ENCODE measurements at regions of chr6 and their contacts with region 1.

Region 1: GRCh38 chr6:129498950-129499842 is 210.8 kb downstream of the ARHGAP18 start:
- H3K4me3 ChIP-seq: no peak overlapping the region
- H3K27ac ChIP-seq: no peak overlapping the region
- H3K4me1 ChIP-seq: peaks cover 3% of the 10 kb centered on the region; the same call in 1 of the 2 replicates
- CTCF ChIP-seq: peak; percentile 30; the same call in 1 of the 2 replicates

Region 2: GRCh38 chr6:129114636-129115391 is 384.4 kb before region 1 on chr6:
- CTCF ChIA-PET with region 1: no interaction called
- POLR2A ChIA-PET with region 1: no interaction called
- H3K4me3 ChIP-seq: no peak overlapping the region
- H3K27ac ChIP-seq: no peak overlapping the region
- H3K4me1 ChIP-seq: no peaks in the 10 kb centered on the region
- CTCF ChIP-seq: no peak

Region 3: GRCh38 chr6:129416337-129416990 is 82.7 kb before region 1 on chr6:
- CTCF ChIA-PET with region 1: no interaction called
- POLR2A ChIA-PET with region 1: no interaction called
- H3K4me3 ChIP-seq: no peak overlapping the region
- H3K27ac ChIP-seq: no peak overlapping the region
- H3K4me1 ChIP-seq: no peaks in the 10 kb centered on the region
- CTCF ChIP-seq: no peak

Region 4: DNA sequence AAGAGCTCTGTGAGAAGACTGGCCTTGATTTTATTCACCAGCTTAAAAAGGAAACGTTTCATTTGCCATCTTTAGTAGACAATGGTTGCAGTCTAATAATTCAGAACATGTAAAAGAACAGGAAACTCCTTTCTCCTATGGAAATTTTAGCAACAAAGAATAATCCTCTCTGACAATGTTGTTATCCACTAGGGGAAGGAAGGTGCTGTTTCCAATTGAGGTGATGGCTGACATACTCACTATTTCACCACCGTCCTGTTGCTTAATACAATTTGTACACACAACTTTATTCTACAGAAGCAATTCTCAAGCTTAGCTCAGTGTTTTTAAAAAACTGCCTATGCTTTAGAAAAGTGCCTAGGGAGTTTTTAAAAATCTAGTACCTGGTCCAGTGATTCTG is 18.1 kb after region 1 on chr6:
- CTCF ChIA-PET with region 1: interaction called, 33 read pairs
- POLR2A ChIA-PET with region 1: no interaction called
- H3K4me3 ChIP-seq: no peak overlapping the region
- H3K27ac ChIP-seq: no peak overlapping the region
- H3K4me1 ChIP-seq: no peaks in the 10 kb centered on the region
- CTCF ChIP-seq: no peak

Region 5: DNA sequence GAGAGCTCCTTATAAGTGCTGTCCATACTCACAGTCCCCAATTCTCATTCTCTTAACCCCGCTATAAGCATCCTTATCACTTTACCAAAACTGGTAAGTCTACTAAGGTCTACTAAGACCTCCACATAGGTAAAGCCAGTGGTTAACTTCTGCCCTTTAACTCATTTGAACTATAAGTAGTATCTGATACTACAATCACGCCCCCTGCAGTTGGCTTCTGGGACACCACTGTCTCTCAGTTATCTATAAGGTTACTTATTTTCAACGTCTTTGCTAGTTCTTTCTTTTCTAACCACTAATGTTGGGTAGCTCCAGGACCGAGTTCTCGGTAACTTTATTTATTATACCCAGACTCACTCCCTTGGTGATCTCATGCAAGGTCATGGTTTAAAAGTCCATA is 68.2 kb after region 1 on chr6:
- CTCF ChIA-PET with region 1: interaction called, 113 read pairs
- POLR2A ChIA-PET with region 1: no interaction called
- H3K4me3 ChIP-seq: no peak overlapping the region
- H3K27ac ChIP-seq: no peak overlapping the region
- H3K4me1 ChIP-seq: no peaks in the 10 kb centered on the region
- CTCF ChIP-seq: no peak

Region 6: GRCh38 chr6:129575378-129576118 is 76.4 kb after region 1 on chr6:
- CTCF ChIA-PET with region 1: interaction called, 95 read pairs
- POLR2A ChIA-PET with region 1: no interaction called
- H3K4me3 ChIP-seq: no peak overlapping the region
- H3K27ac ChIP-seq: no peak overlapping the region
- H3K4me1 ChIP-seq: no peaks in the 10 kb centered on the region
- CTCF ChIP-seq: no peak

Region 7: DNA sequence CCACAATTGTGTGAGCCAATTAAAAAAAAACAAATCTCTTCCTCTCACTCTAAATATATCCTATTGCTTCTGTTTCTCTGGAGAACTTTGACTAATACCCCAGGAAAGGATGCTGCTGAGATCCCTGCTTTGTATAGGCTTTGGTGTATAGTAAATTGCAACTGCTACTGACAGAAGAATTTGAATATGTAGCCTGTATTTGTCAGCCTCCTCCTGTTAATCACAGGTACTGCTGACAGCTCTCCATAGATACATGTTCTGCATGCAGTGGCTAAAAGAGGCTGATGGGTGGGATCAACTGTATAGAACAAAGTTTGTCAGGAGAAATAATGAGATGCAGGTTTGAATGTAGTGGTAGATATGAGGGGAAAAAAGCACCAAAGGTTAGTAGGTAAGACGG is 115.8 kb after region 1 on chr6:
- CTCF ChIA-PET with region 1: no interaction called
- POLR2A ChIA-PET with region 1: no interaction called
- H3K4me3 ChIP-seq: no peak overlapping the region
- H3K27ac ChIP-seq: no peak overlapping the region
- H3K4me1 ChIP-seq: no peaks in the 10 kb centered on the region; the same call in 1 of the 2 replicates
- CTCF ChIP-seq: no peak

Region 8: DNA sequence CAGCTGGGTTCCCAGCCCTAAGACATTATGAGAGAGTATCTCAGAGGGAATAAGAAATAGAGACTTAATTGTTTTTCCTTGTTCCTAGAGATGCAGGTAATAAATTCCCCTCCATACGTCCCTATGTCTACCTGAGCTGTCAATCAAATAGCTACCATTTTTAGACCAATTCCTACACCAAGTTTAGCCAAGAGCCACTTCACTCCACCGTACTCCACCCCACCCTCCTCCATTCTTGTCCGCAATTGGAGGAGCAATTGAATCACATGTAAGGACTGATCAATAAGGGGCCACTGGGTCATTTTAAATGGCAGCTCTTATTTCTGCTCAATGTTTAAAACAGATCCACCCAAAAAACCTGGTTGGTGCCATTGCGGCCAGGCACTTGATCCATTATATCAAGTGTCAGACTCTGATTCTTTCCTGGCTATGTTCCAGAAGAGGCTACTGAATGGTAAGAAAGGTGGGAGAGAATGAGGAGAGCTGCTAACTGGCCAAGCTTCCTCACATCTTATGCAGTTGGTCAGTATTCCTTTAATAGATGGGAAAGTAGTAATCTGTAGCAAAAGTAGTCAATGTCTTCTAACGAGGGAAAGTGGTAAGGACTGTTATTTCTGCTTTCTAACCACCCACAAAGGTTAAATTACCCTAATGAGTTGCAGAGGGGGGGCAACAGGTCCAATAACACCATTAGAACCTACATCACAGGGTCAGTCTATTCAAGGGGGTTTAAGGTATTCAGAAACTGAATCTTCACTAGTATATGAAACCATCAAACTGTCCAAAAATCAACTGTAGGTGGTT is 176.7 kb after region 1 on chr6:
- CTCF ChIA-PET with region 1: no interaction called
- POLR2A ChIA-PET with region 1: no interaction called
- H3K4me3 ChIP-seq: no peak overlapping the region
- H3K27ac ChIP-seq: no peak overlapping the region
- H3K4me1 ChIP-seq: peaks cover 7% of the 10 kb centered on the region; the same call in 1 of the 2 replicates
- CTCF ChIP-seq: no peak

Region 9: GRCh38 chr6:129748212-129748900 is 249.2 kb after region 1 on chr6:
- CTCF ChIA-PET with region 1: interaction called, 10 read pairs
- POLR2A ChIA-PET with region 1: no interaction called
- H3K4me3 ChIP-seq: no peak overlapping the region
- H3K27ac ChIP-seq: no peak overlapping the region
- H3K4me1 ChIP-seq: peaks cover 17% of the 10 kb centered on the region
- CTCF ChIP-seq: no peak

Measured in HEK293 (cell line).